ENCODE measurements at regions of chr17 and their contacts with region 1.

Region 1: DNA sequence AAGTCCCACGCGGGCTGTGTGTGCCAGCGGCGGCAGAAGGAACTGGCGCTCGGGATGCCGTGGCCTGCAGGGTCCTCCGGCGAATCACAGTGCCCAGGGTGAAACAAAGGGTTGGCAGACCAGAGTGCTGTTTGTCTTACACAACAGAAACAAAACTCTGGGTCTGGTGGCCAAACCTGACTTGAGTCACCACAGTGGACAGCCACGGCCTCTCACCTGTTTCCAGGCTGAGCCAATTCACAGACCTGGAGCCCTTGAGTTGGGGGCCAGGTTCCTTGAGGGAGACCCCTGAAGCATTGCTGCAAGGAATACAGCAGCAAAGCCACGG is 2.1 kb upstream of the CHMP6 start:
- DNase-seq: no peak

Region 2: DNA sequence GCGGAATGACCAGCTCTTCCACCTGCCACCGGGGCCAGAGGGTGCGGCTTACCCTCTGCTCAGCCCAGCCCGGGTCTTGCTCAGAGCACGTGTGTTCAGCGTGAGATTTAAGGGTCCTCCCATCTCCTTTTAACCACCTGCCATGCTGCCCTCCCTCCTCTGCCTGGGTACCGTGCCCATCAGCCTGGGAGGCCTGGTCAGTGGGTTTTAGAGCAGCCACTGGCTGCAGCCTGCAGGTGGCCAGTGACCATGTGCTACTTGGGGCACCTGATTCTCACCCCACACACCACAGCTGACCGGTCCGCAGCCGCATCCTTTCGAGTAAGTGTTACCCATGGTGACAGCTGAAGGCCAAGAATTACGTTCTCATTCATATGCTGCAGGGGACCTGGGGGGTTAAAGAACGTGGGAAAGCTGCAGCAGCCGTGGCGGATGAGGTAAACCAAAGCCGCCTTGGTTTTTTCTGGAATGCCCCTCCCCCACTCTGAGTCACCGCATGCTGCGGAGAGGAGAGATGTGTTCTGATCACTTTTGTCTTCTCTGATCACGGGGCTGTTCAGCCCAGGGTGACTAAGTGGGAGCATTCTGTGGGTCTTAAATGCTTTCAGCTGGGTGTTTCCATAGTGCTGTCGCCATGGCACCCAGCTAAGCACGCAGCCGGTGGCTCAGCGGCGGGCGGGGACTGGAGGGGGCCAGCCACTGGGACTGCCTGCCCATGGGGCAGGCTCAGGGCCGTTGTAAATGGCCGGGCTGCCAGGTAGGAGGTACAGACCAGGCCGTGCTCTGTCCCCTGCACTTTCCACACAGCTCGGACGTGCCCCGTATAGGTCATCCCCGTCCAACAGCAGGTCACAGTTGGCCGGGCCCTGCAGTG is 105.2 kb after region 1 on chr17:
- intact Hi-C with region 1: loop called (anchors 1 kb)
- DNase-seq: peak; percentile 61 to 98 (median 85)

Region 3: DNA sequence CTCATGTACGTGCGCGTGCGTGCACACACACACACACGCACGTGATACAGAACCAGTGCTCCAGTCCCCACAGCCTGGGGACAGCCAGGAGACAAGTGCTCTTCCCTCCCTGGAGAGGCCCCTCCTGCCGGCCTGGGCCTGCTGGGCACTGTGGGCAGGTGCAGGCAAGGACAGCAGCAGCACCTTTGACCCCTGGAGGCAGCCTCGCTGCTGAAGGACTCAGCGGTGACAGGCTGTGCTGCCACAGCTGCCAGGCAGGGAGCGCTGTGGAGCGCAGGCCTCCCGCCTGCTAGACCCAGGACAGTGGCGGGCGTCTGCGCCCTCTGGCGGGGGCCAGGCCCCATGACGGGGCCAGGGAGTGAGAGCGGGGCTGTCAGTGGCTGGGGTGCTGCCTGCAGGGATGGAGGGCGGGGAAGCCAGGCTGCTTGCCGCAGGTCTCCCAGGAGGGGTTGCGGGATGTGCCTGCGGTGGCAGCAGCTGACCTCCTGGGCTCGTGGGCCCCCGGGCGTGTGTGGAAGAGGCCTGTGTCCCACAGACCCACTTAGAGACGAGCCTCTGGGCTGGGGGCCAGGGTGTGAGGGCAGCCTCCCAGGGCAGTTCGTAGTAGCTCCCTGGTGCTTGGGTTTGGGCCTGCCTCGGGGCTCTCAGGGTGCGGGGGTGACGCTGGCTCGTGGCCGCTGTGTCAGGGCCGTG is 112.2 kb after region 1 on chr17:
- intact Hi-C with region 1: loop called (anchors 1 kb)
- DNase-seq: peak; percentile 71 to 98 (median 82)

Measured in posterior cingulate gyrus (tissue), 11 donors.